Activated CD4-positive, alpha-beta T cell treated with anti-CD3 and anti-CD28 coated beads for 36 hours (primary cell): ENCODE measurements at regions of chr5 and their contacts with region 1.

Region 1: DNA sequence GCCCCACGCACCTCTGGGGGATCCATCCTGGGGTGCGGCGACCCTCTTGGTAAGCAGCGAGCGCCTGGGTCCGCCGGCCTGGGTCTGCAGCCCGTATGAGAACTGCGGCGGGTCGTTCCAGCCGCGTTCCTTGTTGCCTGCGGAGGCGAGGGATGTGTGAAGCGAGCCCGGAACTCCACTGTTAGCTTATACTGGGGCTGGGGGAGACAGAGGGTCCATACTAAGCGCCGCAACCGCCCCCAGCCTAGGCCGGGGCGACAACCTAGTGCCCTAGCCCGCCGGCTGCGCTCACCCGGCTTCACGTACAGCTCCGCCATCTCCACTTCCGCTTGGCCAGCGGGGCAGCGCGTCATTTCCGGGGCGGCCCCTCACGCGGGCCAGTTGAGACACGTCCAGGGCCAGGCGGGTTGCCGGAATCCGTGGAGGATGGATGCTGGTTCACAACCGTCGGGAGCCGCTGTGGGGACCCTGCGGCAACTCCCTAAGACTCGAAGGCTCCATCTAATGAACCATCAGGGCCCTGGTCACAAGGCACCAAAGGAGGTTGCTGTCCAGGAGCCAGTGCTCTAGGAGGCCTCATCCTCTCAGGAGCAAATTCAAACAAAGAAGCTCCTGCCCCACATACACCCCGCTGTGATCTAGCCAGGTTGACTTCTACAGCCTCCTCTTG is at the start of gene SRA1:
- DNase-seq: peak; percentile 92
- ATAC-seq: peak; percentile 83
- H3K4me3 Mint-ChIP-seq: peak within 1 kb of the TSS; percentile 89
- H3K27ac Mint-ChIP-seq: peak within 1 kb of the TSS; percentile 93
- H3K4me1 Mint-ChIP-seq: peaks cover 45% of the 10 kb centered on the region
- H3K27me3 Mint-ChIP-seq: no peaks in the 10 kb centered on the region
- total RNA-seq, gene SRA1: 33.2 to 47.3 TPM

Region 2: GRCh38 chr5:140251527-140251973 is 305.7 kb before region 1 on chr5:
- CTCF ChIA-PET with region 1: no interaction called
- POLR2A ChIA-PET with region 1: no interaction called
- intact Hi-C with region 1: loop called in 1 of 2 experiments (anchors 10 kb)
- DNase-seq: peak; percentile 85
- ATAC-seq: peak; percentile 94
- H3K4me3 Mint-ChIP-seq: peak overlapping the region; percentile 18
- H3K27ac Mint-ChIP-seq: peak overlapping the region; percentile 90
- H3K4me1 Mint-ChIP-seq: peaks cover 42% of the 10 kb centered on the region
- H3K27me3 Mint-ChIP-seq: no peaks in the 10 kb centered on the region

Region 3: GRCh38 chr5:140639148-140639979 is 82.1 kb after region 1 on chr5 and contains the start of gene TMCO6:
- CTCF ChIA-PET with region 1: interaction called, 3 read pairs
- POLR2A ChIA-PET with region 1: no interaction called
- intact Hi-C with region 1: loop called (anchors 1 to 2 kb)
- DNase-seq: peak; percentile 99
- ATAC-seq: peak; percentile 94
- H3K4me3 Mint-ChIP-seq: peak within 1 kb of the TSS; percentile 93
- H3K27ac Mint-ChIP-seq: peak within 1 kb of the TSS; percentile 95
- H3K4me1 Mint-ChIP-seq: peaks cover 39% of the 10 kb centered on the region
- H3K27me3 Mint-ChIP-seq: no peaks in the 10 kb centered on the region
- total RNA-seq, gene TMCO6: 36.5 to 36.6 TPM

Region 4: DNA sequence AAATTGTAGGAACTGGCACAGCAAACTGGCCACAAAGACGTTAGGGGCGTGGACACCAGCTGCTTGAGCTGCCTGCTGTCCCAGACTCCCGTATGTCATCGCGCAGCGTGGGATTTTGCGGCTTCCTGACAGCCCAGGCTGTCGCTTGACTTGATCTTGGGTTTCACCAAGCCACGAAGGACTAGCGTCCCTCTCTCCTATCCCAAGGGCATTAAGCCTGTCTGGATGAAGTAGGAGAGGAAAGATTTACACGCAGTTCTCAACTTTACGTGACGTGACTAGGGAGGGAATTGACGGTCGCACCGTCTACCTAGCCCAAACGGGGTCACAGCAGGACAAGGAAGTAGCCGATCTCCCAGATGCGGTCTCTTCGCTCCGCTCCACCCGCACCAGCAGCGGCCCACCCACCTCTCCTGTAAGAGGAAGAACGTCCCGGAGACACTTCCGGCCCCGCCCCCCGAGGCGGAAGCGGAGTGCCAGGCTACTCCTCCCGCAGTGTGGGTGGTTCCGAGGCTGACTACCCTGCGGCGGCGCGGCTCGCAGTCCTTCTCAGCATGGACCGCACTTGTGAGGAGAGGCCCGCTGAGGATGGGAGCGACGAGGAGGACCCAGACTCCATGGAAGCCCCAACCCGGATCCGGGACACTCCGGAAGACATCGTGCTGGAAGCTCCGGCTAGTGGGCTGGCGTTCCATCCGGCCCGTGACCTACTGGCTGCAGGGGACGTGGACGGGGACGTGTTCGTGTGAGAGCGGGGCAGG is 107.3 kb after region 1 on chr5 and contains the start of gene WDR55:
- CTCF ChIA-PET with region 1: no interaction called
- POLR2A ChIA-PET with region 1: no interaction called
- intact Hi-C with region 1: loop called in 1 of 2 experiments (anchors 2 kb)
- DNase-seq: peak; percentile 97
- ATAC-seq: peak; percentile 96
- H3K4me3 Mint-ChIP-seq: peak within 1 kb of the TSS; percentile 98
- H3K27ac Mint-ChIP-seq: peak within 1 kb of the TSS; percentile 96
- H3K4me1 Mint-ChIP-seq: peaks cover 28% of the 10 kb centered on the region
- H3K27me3 Mint-ChIP-seq: no peaks in the 10 kb centered on the region
- total RNA-seq, gene WDR55: 25.9 to 31.7 TPM

Region 5: GRCh38 chr5:140700177-140701144 is 143.2 kb after region 1 on chr5 and contains the start of gene ZMAT2:
- CTCF ChIA-PET with region 1: interaction called, 3 read pairs
- POLR2A ChIA-PET with region 1: no interaction called
- intact Hi-C with region 1: loop called in 1 of 2 experiments (anchors 5 kb)
- DNase-seq: peak; percentile 96
- ATAC-seq: peak; percentile 100
- H3K4me3 Mint-ChIP-seq: peak within 1 kb of the TSS; percentile 94
- H3K27ac Mint-ChIP-seq: peak within 1 kb of the TSS; percentile 94
- H3K4me1 Mint-ChIP-seq: peaks cover 24% of the 10 kb centered on the region
- H3K27me3 Mint-ChIP-seq: no peaks in the 10 kb centered on the region
- total RNA-seq, gene ZMAT2: 49.9 to 55.3 TPM